ENCODE measurements at regions of chrX and their contacts with region 1.

Region 1: GRCh38 chrX:77603635-77604336 is 156.6 kb downstream of the FGF16 start:
- DNase-seq: no peak
- H3K4me3 ChIP-seq: no peak overlapping the region
- H3K27ac ChIP-seq: no peak overlapping the region
- H3K4me1 ChIP-seq: no peaks in the 10 kb centered on the region
- H3K27me3 ChIP-seq: no peaks in the 10 kb centered on the region
- CTCF ChIP-seq: no peak

Region 2: DNA sequence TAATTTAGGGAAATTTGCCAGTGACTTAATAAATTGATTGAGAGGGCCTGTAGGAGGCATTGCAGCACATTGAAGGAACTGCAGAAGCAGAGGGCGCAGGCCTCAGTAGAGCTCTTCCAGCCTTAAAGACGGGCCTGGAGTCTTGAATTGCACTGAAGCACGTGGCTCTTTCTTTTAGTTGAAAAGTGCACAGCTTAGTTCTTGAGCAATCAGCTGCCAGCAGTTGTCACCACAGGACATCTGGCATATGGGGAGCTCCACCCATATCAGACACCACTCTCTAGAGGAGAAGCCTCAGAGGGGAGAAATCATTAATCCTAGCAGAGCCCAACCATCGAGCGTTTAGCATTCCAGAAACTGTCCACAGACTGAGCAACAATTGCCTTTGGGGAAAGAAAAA is 172.6 kb before region 1 on chrX:
- intact Hi-C with region 1: no loop called
- DNase-seq: no peak
- H3K4me3 ChIP-seq: no peak overlapping the region
- H3K27ac ChIP-seq: no peak overlapping the region
- H3K4me1 ChIP-seq: no peaks in the 10 kb centered on the region
- H3K27me3 ChIP-seq: no peaks in the 10 kb centered on the region
- CTCF ChIP-seq: no peak

Region 3: GRCh38 chrX:77668391-77669237 is 64.8 kb after region 1 on chrX:
- intact Hi-C with region 1: loop called (anchors 10 kb)
- DNase-seq: no peak
- H3K4me3 ChIP-seq: no peak overlapping the region
- H3K27ac ChIP-seq: peak overlapping the region in 1 of 2 donors; percentile 18
- H3K4me1 ChIP-seq: no peaks in the 10 kb centered on the region
- H3K27me3 ChIP-seq: no peaks in the 10 kb centered on the region
- CTCF ChIP-seq: no peak

Region 4: DNA sequence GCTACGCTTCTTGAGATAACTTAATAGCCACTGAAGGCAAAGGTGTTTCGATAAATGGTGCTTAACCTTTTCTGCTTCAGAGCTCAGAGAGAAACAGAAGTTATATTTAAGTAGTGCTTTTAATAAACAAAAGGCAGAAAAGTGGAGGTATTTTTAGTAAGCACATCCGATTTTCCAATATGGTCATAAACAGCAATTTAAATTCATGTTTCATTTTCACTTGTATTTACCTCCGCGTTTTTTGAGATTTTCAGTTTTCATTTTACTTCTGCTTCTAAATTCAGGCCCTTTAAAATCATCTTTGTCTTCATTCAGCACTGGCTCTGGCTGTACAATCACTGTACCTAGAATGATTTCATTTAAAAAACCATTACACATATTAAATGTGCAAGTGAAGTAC is 89.8 kb after region 1 on chrX:
- intact Hi-C with region 1: no loop called
- DNase-seq: no peak
- H3K4me3 ChIP-seq: no peak overlapping the region
- H3K27ac ChIP-seq: no peak overlapping the region
- H3K4me1 ChIP-seq: no peaks in the 10 kb centered on the region
- H3K27me3 ChIP-seq: no peaks in the 10 kb centered on the region
- CTCF ChIP-seq: no peak

Region 5: GRCh38 chrX:77776659-77777058 is 172.9 kb after region 1 on chrX:
- intact Hi-C with region 1: no loop called
- DNase-seq: no peak
- H3K4me3 ChIP-seq: no peak overlapping the region
- H3K27ac ChIP-seq: no peak overlapping the region
- H3K4me1 ChIP-seq: no peaks in the 10 kb centered on the region
- H3K27me3 ChIP-seq: no peaks in the 10 kb centered on the region
- CTCF ChIP-seq: no peak

Measured in ascending aorta (tissue), 2 donors.